Caco-2 (cell line): ENCODE measurements at regions of chr1 and their contacts with region 1.

Region 1: DNA sequence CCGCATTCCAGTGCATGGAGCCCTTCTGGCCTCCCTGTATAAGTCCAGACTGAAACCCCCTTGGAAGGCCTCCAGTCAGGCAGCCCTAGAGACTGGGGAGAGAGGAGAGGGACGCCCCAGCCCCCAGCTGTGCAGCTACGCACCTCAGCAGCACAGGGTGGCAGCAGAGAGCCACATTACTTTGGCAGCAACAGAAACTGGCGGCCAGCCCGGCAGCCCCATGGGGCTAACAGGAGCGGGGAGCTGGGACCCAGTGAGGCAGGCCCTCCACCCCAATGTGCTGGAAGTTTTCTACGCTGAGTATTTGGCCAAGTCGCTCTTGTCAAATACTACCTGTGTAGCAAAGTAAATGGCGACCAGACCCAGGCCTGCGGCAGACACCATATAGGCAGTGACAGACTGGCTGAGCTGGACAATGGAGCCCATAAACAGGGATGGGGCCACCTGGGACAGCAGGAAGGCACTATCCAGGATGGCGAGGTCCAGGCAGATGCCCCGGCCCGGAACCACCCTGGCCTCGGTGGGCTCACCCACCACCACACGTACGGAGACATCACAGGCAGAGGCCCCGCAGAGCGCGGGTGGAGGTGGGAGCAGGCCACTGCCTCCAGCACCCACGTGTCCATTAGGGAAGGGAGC is 21.2 kb downstream of the SLC45A3 start:
- DNase-seq: peak; percentile 70 to 81
- H3K4me3 ChIP-seq: no peak overlapping the region
- H3K4me3 Mint-ChIP-seq: no peak overlapping the region
- H3K27ac Mint-ChIP-seq: no peak overlapping the region
- H3K4me1 ChIP-seq: no peaks in the 10 kb centered on the region
- H3K4me1 Mint-ChIP-seq: no peaks in the 10 kb centered on the region
- H3K27me3 ChIP-seq: no peaks in the 10 kb centered on the region
- H3K27me3 Mint-ChIP-seq: no peaks in the 10 kb centered on the region
- CTCF ChIP-seq: peak; percentile 85 to 90

Region 2: GRCh38 chr1:205312866-205313562 is 346.0 kb before region 1 on chr1:
- CTCF ChIA-PET with region 1: no interaction called
- POLR2A ChIA-PET with region 1: interaction called, 14 read pairs
- intact Hi-C with region 1: no loop called
- DNase-seq: no peak
- H3K4me3 ChIP-seq: no peak overlapping the region
- H3K4me3 Mint-ChIP-seq: no peak overlapping the region
- H3K27ac Mint-ChIP-seq: peak overlapping the region; percentile 24
- H3K4me1 ChIP-seq: peaks cover 50% of the 10 kb centered on the region
- H3K4me1 Mint-ChIP-seq: peaks cover 33% of the 10 kb centered on the region
- H3K27me3 ChIP-seq: no peaks in the 10 kb centered on the region
- H3K27me3 Mint-ChIP-seq: no peaks in the 10 kb centered on the region
- CTCF ChIP-seq: no peak

Region 3: DNA sequence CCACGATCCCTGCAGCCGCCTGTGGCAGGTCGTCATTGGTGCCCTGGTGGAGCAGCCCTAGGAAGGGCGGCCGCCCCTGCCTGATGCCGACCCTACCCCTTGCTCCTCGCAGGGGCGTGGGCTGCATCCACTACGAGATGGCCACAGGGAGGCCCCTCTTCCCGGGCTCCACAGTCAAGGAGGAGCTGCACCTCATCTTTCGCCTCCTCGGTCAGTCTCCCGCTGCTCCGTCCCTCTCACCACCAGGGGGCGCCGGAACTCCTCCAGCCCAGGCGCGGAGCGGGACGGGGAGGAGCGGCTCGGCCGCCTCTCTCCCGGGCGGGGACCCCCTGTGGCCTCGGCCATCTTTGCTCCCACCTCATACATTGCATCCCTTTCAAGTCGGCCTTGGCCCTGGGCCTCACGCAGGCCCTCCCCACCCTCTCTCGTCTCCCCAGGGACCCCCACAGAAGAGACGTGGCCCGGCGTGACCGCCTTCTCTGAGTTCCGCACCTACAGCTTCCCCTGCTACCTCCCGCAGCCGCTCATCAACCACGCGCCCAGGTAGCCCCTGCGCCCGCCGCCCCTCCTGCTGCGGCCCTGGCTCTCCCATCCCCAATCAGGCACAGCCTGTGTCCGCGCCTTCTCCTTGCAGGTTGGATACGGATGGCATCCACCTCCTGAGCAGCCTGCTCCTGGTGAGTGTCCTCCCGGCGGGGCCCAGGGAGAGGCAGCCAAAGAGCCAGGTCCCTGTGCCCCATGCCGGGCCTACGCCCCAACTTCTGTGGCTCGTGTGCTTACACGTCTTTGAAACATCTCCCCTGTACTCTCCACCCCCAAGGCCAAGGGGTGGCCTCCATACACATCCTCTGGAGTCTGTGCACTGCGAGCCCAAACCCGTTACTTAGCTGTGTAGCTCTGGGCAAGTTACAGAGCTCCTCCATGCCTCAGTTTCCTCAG is 129.9 kb before region 1 on chr1:
- CTCF ChIA-PET with region 1: interaction called, 23 read pairs
- POLR2A ChIA-PET with region 1: no interaction called
- intact Hi-C with region 1: loop called (anchors 1 kb)
- DNase-seq: peak; percentile 71 to 85
- H3K4me3 ChIP-seq: no peak overlapping the region
- H3K4me3 Mint-ChIP-seq: peak overlapping the region; percentile 49
- H3K27ac Mint-ChIP-seq: no peak overlapping the region
- H3K4me1 ChIP-seq: no peaks in the 10 kb centered on the region
- H3K4me1 Mint-ChIP-seq: no peaks in the 10 kb centered on the region
- H3K27me3 ChIP-seq: no peaks in the 10 kb centered on the region
- H3K27me3 Mint-ChIP-seq: peaks cover 4% of the 10 kb centered on the region
- CTCF ChIP-seq: peak; percentile 93 to 94

Region 4: GRCh38 chr1:205631727-205632373 is 27.2 kb before region 1 on chr1 and contains the start of gene ELK4:
- CTCF ChIA-PET with region 1: interaction called, 20 read pairs
- POLR2A ChIA-PET with region 1: interaction called, 3 read pairs
- intact Hi-C with region 1: loop called (anchors 2 kb)
- DNase-seq: peak; percentile 99
- H3K4me3 ChIP-seq: peak within 1 kb of the TSS; percentile 82
- H3K4me3 Mint-ChIP-seq: peak within 1 kb of the TSS; percentile 86
- H3K27ac Mint-ChIP-seq: peak within 1 kb of the TSS; percentile 87
- H3K4me1 ChIP-seq: peaks cover 8% of the 10 kb centered on the region; the same call in 1 of the 2 replicates
- H3K4me1 Mint-ChIP-seq: peaks cover 6% of the 10 kb centered on the region
- H3K27me3 ChIP-seq: no peaks in the 10 kb centered on the region
- H3K27me3 Mint-ChIP-seq: no peaks in the 10 kb centered on the region
- CTCF ChIP-seq: peak; percentile 57 to 80
- total RNA-seq, gene ELK4: 14.4 and 16.9 TPM in 2 replicates

Region 5: GRCh38 chr1:205711104-205712020 is 52.3 kb after region 1 on chr1:
- CTCF ChIA-PET with region 1: interaction called, 95 read pairs
- POLR2A ChIA-PET with region 1: no interaction called
- intact Hi-C with region 1: loop called (anchors 1 kb)
- DNase-seq: peak; percentile 61 to 70
- H3K4me3 ChIP-seq: no peak overlapping the region
- H3K4me3 Mint-ChIP-seq: no peak overlapping the region
- H3K27ac Mint-ChIP-seq: no peak overlapping the region
- H3K4me1 ChIP-seq: peaks cover 10% of the 10 kb centered on the region
- H3K4me1 Mint-ChIP-seq: peaks cover 5% of the 10 kb centered on the region
- H3K27me3 ChIP-seq: no peaks in the 10 kb centered on the region
- H3K27me3 Mint-ChIP-seq: no peaks in the 10 kb centered on the region
- CTCF ChIP-seq: peak; percentile 85 to 87

Region 6: DNA sequence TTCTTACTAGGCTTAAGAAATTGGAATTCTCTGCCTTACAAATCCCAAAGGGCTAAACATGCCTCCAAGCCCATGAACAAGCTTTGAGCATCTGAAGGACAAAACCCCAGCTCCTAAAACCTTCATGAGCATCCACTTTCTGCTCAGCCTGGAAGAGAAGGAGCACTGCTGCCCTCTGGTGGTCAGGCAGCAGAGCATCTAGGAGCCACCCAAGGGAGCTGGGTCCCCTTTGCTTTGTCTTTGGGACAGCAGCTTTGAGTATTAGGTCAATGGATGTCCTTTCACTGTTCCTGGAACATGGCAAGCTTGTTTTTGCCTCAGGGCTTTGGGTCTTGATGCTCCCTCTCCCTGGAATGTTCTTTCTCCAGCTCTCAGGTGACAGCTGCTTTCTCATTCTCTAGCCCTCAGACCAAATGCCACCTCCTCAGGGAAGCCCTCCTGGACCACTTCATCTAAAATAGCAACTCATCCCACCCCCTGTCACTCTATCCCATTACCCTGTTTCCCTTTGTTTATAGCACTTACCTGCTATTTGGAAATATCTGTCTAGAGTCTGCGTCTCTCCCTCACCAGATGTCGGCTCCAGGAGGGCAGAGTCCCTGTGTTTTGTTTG is 318.4 kb after region 1 on chr1:
- CTCF ChIA-PET with region 1: interaction called, 23 read pairs
- POLR2A ChIA-PET with region 1: no interaction called
- intact Hi-C with region 1: loop called (anchors 5 kb)
- DNase-seq: peak; percentile 74 to 81
- H3K4me3 ChIP-seq: no peak overlapping the region
- H3K4me3 Mint-ChIP-seq: no peak overlapping the region
- H3K27ac Mint-ChIP-seq: no peak overlapping the region
- H3K4me1 ChIP-seq: 0 out of 2 replicates have a peak, but pooled peaks cover 5% of the 10 kb centered on the region
- H3K4me1 Mint-ChIP-seq: no peaks in the 10 kb centered on the region
- H3K27me3 ChIP-seq: no peaks in the 10 kb centered on the region
- H3K27me3 Mint-ChIP-seq: peaks cover 9% of the 10 kb centered on the region
- CTCF ChIP-seq: peak; percentile 94 to 97

Region 7: DNA sequence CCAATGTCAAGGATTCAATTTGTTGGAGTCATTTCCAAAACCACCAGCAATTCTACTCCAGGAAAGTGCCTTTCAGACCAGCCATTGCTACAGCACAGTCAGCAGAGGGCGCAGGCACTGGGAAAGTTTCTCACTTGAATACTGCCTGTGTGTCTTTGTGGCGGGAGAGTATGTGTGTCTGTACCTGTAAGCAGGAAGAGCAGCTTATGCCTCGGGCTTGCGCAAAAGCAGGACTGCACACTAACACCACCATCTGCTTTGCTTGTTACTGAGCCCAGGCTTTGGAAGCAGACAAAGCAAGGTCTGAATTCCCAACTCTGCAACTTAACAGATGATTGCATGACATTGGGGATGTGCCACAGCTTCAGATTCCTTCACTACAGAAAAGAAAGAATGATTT is 371.7 kb after region 1 on chr1:
- CTCF ChIA-PET with region 1: no interaction called
- POLR2A ChIA-PET with region 1: no interaction called
- intact Hi-C with region 1: no loop called
- DNase-seq: peak; percentile 82 to 86
- H3K4me3 ChIP-seq: no peak overlapping the region
- H3K4me3 Mint-ChIP-seq: no peak overlapping the region
- H3K27ac Mint-ChIP-seq: no peak overlapping the region
- H3K4me1 ChIP-seq: peaks cover 10% of the 10 kb centered on the region
- H3K4me1 Mint-ChIP-seq: peaks cover 5% of the 10 kb centered on the region
- H3K27me3 ChIP-seq: no peaks in the 10 kb centered on the region
- H3K27me3 Mint-ChIP-seq: peaks cover 7% of the 10 kb centered on the region
- CTCF ChIP-seq: peak; percentile 79 to 97